ENCODE measurements at regions of chr6 and their contacts with region 1.

Region 1: DNA sequence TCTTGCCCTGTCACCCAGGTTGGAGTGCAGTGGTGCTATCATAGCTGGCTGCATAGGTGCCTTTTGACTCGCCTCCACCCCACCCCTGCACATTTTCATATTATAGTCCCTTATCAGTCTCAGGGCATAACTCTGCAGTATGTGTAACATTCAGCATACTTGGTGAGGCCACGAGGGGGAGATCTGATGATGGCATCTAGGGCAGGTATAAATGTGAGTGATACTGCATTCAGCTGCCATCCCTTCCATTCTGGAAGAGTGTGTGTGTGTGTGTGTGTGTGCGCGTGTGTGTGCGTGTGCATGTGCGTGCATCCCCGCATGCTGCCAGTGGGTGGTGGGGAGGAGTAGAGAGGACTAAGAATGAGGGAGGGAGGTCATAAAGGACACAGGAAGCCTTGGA is 81.4 kb downstream of the JARID2 start:
- DNase-seq: peak in 1 of 2 donors; percentile 67
- ATAC-seq: peak; percentile 39 to 44 (median 40)
- H3K4me3 ChIP-seq: no peak overlapping the region
- H3K4me3 Mint-ChIP-seq: peak overlapping the region; percentile 73
- H3K27ac ChIP-seq: peak overlapping the region; percentile 9
- H3K27ac Mint-ChIP-seq: peak overlapping the region; percentile 78 to 85
- H3K4me1 ChIP-seq: peaks cover 52% of the 10 kb centered on the region
- H3K4me1 Mint-ChIP-seq: peaks cover 82 to 90% of the 10 kb centered on the region in 2 donors
- H3K27me3 ChIP-seq: no peaks in the 10 kb centered on the region
- H3K27me3 Mint-ChIP-seq: no peaks in the 10 kb centered on the region
- CTCF ChIP-seq: peak; percentile 32

Region 2: GRCh38 chr6:15299430-15300131 is 27.7 kb before region 1 on chr6:
- intact Hi-C with region 1: loop called (anchors 2 kb)
- DNase-seq: peak; percentile 56 to 65
- ATAC-seq: peak; percentile 84 to 94 (median 90)
- H3K4me3 ChIP-seq: no peak overlapping the region
- H3K4me3 Mint-ChIP-seq: peak overlapping the region; percentile 71
- H3K27ac ChIP-seq: peak overlapping the region; percentile 72
- H3K27ac Mint-ChIP-seq: peak overlapping the region; percentile 93 to 94
- H3K4me1 ChIP-seq: peaks cover 65% of the 10 kb centered on the region
- H3K4me1 Mint-ChIP-seq: peaks cover 76 to 80% of the 10 kb centered on the region in 2 donors
- H3K27me3 ChIP-seq: no peaks in the 10 kb centered on the region
- H3K27me3 Mint-ChIP-seq: no peaks in the 10 kb centered on the region
- CTCF ChIP-seq: no peak

Region 3: DNA sequence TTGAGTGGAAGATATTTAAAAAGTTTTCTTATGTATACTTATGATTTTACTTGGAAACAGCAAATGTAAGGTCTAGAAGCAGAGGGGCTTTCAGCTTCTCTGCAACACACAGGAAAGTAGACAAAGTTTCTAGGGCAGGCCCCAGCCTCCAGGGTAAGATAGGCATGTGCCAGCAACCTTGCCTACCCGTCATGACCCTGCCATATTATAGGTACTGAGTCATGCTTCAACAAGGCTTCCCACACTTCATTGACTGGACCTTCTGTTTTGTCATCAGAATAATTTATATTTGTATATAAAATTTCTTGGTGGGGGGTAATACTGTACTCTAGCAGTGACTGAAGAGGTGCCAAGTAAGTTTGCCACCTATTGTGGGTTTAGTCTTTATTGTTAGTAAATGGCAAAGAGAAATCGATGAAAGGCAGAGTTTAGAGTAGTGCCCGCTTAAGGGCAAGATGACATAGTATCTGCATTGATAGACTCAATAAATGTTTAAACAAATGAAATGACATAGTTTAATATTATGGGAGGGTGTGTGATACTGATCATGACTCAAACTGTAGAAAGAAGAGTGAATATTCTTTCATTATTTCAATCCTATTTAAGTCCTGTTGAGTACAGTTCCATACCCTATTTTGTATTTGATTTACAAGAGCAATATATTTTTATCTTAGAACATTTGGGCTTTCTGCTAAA is 14.2 kb after region 1 on chr6:
- intact Hi-C with region 1: no loop called
- DNase-seq: no peak
- ATAC-seq: peak; percentile 36 to 72 (median 45)
- H3K4me3 ChIP-seq: no peak overlapping the region
- H3K4me3 Mint-ChIP-seq: peak overlapping the region; percentile 70
- H3K27ac ChIP-seq: peak overlapping the region; percentile 53
- H3K27ac Mint-ChIP-seq: peak overlapping the region; percentile 87 to 88
- H3K4me1 ChIP-seq: peaks cover 43% of the 10 kb centered on the region
- H3K4me1 Mint-ChIP-seq: peaks cover 81 to 86% of the 10 kb centered on the region in 2 donors
- H3K27me3 ChIP-seq: no peaks in the 10 kb centered on the region
- H3K27me3 Mint-ChIP-seq: no peaks in the 10 kb centered on the region
- CTCF ChIP-seq: no peak

Region 4: DNA sequence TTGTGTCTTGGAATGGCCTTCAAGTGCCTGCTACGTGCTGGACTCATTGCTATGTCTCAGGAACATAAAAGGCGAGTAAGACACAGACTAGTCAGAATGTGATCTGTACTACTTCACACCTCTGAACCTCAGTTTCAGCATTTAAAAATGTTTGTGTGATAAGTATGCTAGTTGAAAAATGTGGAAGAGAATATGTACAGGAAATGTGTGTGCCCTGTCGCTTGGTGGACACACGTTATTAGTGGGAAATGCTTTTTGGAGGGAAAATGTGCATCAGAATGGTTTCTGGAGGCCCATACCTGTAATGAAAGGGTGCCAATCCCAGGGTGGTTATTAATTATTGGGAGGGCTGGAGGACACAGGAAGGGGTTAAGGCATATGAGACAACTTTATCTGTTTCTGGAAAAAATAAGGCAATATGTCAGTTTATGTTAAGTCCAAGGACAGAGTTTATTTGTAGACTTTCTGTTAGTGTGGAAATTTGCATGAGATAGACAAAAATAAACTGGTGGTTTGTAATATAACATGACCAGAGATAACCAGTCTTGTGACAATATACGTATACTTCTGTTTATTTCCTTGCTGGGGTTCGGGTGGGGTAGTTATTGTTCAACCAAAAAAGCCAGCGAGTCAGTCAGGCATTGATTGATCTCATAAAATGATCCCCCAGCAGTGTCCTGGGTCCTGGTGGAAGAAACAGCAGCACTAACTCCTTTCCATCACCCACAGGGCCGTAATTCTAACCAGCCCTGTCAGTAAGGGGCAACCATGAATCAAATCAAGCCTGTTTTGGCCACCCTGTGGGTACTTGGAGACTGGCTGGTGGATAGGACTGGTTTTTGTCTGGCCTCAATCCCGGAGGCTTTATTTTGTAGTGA is 36.5 kb after region 1 on chr6:
- intact Hi-C with region 1: loop called (anchors 2 kb)
- DNase-seq: no peak
- ATAC-seq: peak; percentile 49 to 68 (median 65)
- H3K4me3 ChIP-seq: no peak overlapping the region
- H3K4me3 Mint-ChIP-seq: no peak overlapping the region
- H3K27ac ChIP-seq: peak overlapping the region; percentile 20
- H3K27ac Mint-ChIP-seq: no peak overlapping the region
- H3K4me1 ChIP-seq: peaks cover 48% of the 10 kb centered on the region
- H3K4me1 Mint-ChIP-seq: peaks cover 48% of the 10 kb centered on the region in 2 donors
- H3K27me3 ChIP-seq: no peaks in the 10 kb centered on the region
- H3K27me3 Mint-ChIP-seq: no peaks in the 10 kb centered on the region
- CTCF ChIP-seq: no peak

Region 5: DNA sequence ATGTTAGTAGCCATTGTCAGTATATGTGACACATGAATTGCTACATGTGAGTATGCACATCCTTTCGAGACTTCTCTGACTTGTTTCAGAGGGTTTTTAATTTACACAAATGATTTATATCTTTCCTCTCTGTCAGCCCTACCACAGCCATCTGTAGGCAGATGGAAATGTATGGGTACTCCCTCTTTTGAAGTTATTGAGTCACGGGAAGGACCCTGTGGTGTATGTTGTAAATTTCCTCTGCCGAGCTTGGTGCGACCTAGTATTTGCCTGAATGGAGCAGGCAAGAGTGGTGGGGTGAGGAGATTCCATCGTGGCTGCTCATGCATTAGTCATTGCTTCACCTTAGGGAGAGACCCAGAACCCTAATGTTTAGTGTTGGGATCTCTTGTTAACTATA is 90.5 kb after region 1 on chr6:
- intact Hi-C with region 1: no loop called
- DNase-seq: no peak
- ATAC-seq: no peak
- H3K4me3 ChIP-seq: no peak overlapping the region
- H3K4me3 Mint-ChIP-seq: no peak overlapping the region
- H3K27ac ChIP-seq: no peak overlapping the region
- H3K27ac Mint-ChIP-seq: peak overlapping the region; percentile 68 to 70
- H3K4me1 ChIP-seq: peaks cover 18% of the 10 kb centered on the region
- H3K4me1 Mint-ChIP-seq: peaks cover 55 to 65% of the 10 kb centered on the region in 2 donors
- H3K27me3 ChIP-seq: no peaks in the 10 kb centered on the region
- H3K27me3 Mint-ChIP-seq: no peaks in the 10 kb centered on the region
- CTCF ChIP-seq: no peak

Region 6: GRCh38 chr6:15441215-15441868 is 114.1 kb after region 1 on chr6:
- intact Hi-C with region 1: loop called (anchors 2 kb)
- DNase-seq: peak in 1 of 2 donors; percentile 75
- ATAC-seq: peak; percentile 49 to 72 (median 60)
- H3K4me3 ChIP-seq: no peak overlapping the region
- H3K4me3 Mint-ChIP-seq: no peak overlapping the region
- H3K27ac ChIP-seq: no peak overlapping the region
- H3K27ac Mint-ChIP-seq: peak overlapping the region; percentile 68 to 88
- H3K4me1 ChIP-seq: peaks cover 39% of the 10 kb centered on the region
- H3K4me1 Mint-ChIP-seq: peaks cover 85 to 87% of the 10 kb centered on the region in 2 donors
- H3K27me3 ChIP-seq: no peaks in the 10 kb centered on the region
- H3K27me3 Mint-ChIP-seq: no peaks in the 10 kb centered on the region
- CTCF ChIP-seq: peak; percentile 81

Region 7: DNA sequence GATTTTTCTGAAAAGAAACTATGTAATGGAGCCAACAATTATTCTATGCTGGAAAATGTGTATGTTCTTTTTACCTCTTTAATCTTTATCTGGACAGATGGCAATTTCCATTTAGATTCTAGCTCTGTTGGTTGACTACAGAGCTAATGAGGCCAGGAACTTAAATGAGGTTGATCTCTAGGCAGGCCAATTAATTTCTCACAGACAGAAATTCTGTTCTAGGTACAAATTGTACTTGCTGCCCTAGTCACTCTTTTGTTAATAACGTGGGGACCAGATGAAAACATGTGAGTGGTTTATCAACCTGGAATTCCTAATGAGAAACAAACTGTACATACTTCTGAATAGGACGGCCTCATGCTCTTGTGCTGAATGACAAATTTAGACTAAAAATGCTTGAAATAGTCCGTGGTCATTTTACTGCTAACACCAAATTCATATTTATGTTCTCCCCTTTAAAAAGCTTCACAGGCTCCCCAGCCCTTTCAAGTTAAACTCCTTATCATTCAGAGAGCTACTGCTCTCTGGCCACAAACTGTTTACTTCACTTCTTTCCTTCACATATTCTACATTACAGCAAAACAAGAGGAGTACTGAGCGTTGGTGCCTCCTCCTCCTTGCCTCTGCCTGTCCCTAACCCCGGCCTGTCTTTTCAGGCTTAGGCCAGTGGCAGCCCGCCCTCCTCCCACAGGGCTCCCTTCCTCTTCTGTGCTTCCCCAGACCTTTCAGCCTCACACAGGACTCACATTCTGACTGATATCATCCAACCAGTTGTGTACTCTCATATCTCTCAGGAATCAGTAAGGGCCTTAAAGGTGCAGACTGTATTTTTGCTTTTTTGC is 294.2 kb after region 1 on chr6:
- intact Hi-C with region 1: loop called (anchors 10 kb)
- DNase-seq: no peak
- ATAC-seq: peak in 2 of 3 donors; percentile 53 to 67
- H3K4me3 ChIP-seq: no peak overlapping the region
- H3K4me3 Mint-ChIP-seq: no peak overlapping the region
- H3K27ac ChIP-seq: peak overlapping the region; percentile 34
- H3K27ac Mint-ChIP-seq: peak overlapping the region in 1 of 2 donors; percentile 84
- H3K4me1 ChIP-seq: peaks cover 6% of the 10 kb centered on the region
- H3K4me1 Mint-ChIP-seq: peaks cover 37 to 51% of the 10 kb centered on the region in 2 donors
- H3K27me3 ChIP-seq: no peaks in the 10 kb centered on the region
- H3K27me3 Mint-ChIP-seq: no peaks in the 10 kb centered on the region
- CTCF ChIP-seq: no peak